Calu3 (cell line): ENCODE measurements at regions of chr4 and their contacts with region 1.

Region 1: DNA sequence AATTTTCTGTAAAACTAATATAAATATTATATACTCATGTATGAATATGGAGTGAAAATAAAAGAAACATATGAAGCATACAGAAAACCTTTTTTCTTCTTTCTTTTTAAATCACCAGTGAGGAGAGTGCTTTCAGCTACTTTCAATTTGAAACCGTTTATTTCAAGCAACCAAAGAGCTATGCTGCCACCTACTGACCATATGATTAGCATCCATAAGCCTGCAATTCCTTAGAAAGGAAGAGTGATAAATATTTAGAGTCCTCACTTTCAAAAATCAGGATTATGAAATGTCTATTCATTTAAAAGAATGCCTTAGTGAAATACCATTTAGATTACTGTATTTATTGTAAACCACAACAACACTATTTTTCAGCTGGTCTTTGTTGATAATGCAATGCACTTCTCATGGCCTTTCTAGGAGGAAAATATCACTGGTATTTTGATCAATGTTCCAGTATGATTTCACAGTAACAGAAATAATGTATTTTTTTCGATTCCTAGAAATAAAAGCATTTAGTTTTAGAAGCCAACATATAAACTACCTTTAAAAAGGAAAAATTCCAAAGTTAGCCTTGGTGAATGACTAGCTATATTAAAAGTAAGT is 667.6 kb downstream of the PCDH18 start:
- DNase-seq: peak; percentile 44
- H3K4me3 Mint-ChIP-seq: no peak overlapping the region
- H3K27ac Mint-ChIP-seq: no peak overlapping the region
- H3K4me1 Mint-ChIP-seq: no peaks in the 10 kb centered on the region
- H3K27me3 Mint-ChIP-seq: no peaks in the 10 kb centered on the region
- CTCF ChIP-seq: peak; percentile 67

Region 2: DNA sequence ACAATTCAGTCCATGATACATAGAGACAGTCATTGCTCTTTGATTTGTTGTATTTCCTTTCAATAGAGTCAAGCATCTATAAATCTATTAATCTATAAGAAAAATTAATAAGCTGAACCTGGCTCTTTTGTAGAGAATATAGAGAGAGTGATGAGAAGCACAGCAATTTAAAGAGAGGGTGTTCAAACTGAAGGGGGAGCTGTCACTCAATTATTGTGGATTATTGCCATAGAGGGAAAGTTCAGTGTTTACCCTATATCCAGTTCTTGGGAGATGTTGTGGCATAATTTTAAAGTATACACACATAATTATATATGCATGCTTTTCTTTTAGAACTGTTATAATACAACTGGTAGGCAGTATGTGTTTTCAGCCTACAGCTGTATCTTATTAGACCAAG is 1194.1 kb before region 1 on chr4:
- CTCF ChIA-PET with region 1: no interaction called
- intact Hi-C with region 1: loop called (anchors 10 kb)
- DNase-seq: no peak
- H3K4me3 Mint-ChIP-seq: no peak overlapping the region
- H3K27ac Mint-ChIP-seq: no peak overlapping the region
- H3K4me1 Mint-ChIP-seq: peaks cover 17% of the 10 kb centered on the region
- H3K27me3 Mint-ChIP-seq: no peaks in the 10 kb centered on the region
- CTCF ChIP-seq: no peak

Region 3: DNA sequence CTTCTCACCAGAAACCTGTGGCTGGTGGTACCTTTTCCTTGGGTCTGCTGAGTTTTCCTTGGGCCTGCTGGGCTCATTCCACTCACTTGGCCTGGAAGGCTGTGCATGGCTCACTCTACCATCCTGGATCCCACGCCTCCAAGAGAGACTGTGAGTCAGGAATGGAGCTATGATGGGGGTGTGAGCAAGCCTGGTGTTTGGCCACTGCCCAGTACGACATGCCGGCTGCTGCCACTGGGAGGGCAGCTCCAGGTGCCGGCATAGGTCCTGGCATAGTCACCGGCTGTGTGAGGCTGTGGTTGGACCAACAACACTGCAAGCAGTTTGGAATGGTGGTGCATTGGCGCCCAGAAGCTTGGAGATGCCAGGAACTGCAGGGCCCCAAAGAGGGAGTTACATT is 54.1 kb before region 1 on chr4:
- CTCF ChIA-PET with region 1: no interaction called
- intact Hi-C with region 1: no loop called
- DNase-seq: no peak
- H3K4me3 Mint-ChIP-seq: no peak overlapping the region
- H3K27ac Mint-ChIP-seq: no peak overlapping the region
- H3K4me1 Mint-ChIP-seq: no peaks in the 10 kb centered on the region
- H3K27me3 Mint-ChIP-seq: no peaks in the 10 kb centered on the region
- CTCF ChIP-seq: no peak